Panc1 (cell line): ENCODE measurements at regions of chr1 and their contacts with region 1.

Region 1: GRCh38 chr1:225877580-225877979 is 4.6 kb downstream of the TMEM63A start:
- DNase-seq: no peak
- ATAC-seq: 0 out of 2 replicates have a peak, but pooled peaks have one; percentile 39
- H3K4me3 ChIP-seq: no peak overlapping the region
- H3K27ac ChIP-seq: no peak overlapping the region
- H3K4me1 ChIP-seq: peaks cover 36% of the 10 kb centered on the region
- H3K27me3 ChIP-seq: no peaks in the 10 kb centered on the region
- CTCF ChIP-seq: peak; percentile 84

Region 2: DNA sequence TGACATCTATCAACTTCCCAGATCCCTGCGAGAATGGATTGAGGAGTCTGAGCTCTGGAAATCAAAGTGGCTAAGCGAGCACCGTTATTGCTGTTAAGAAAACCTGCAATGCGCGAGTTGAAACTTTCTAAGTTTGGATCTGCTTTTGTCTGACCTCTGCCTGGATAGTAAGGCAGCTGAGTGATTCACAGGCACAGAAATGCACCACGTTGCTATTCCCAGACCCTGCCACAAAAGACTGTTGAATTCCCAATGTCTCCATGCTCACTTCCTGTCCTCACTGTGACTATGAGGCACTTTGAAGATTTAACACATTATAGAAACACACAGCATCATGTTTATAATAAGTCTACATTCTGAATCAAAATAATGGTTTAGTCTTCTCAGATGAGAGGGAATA is 1288.6 kb before region 1 on chr1:
- CTCF ChIA-PET with region 1: no interaction called
- POLR2A ChIA-PET with region 1: interaction called, 14 read pairs
- in situ Hi-C with region 1: no loop called
- intact Hi-C with region 1: no loop called
- DNase-seq: no peak
- ATAC-seq: no peak
- H3K4me3 ChIP-seq: no peak overlapping the region
- H3K27ac ChIP-seq: no peak overlapping the region
- H3K4me1 ChIP-seq: no peaks in the 10 kb centered on the region
- H3K27me3 ChIP-seq: no peaks in the 10 kb centered on the region
- CTCF ChIP-seq: no peak